PC-3 (cell line): ENCODE measurements at regions of chr15 and their contacts with region 1.

Region 1: GRCh38 chr15:38414357-38414756 is 39.6 kb upstream of the FAM98B start:
- DNase-seq: peak; percentile 76
- ATAC-seq: peak; percentile 100
- H3K4me3 ChIP-seq: no peak overlapping the region
- H3K27ac ChIP-seq: no peak overlapping the region
- H3K4me1 ChIP-seq: no peaks in the 10 kb centered on the region
- H3K27me3 ChIP-seq: peaks cover 25% of the 10 kb centered on the region
- CTCF ChIP-seq: peak; percentile 93

Region 2: DNA sequence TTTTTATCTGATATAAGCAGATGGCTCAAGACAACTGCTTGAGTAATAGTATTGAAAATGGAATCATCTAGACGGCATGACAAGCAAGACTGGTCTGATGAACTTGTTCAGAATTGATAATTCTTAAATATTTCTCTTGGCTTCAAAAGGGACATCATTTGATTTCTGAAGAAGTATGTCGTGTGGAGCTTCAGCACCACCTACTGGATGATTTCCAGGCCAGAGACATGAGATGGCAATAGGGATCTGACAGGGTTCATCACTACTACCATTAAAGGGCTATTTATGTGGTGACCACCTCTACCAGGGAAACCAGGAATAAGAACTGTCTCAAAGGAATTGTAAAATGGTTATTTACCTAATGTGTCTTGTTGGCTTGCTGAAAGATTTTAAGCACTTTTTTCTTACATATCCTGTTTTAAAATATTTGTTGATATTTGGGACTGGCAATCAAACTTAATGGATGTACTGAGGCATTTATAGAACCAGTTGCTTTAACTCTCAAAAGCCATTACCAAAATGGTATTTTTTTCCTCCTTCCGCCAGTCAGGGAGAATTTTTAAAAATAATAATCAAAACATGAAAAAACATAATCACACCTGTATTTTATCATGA is 59.9 kb before region 1 on chr15:
- CTCF ChIA-PET with region 1: no interaction called
- POLR2A ChIA-PET with region 1: no interaction called
- intact Hi-C with region 1: loop called (anchors 1 kb)
- DNase-seq: peak; percentile 87
- ATAC-seq: peak; percentile 85
- H3K4me3 ChIP-seq: no peak overlapping the region
- H3K27ac ChIP-seq: no peak overlapping the region
- H3K4me1 ChIP-seq: no peaks in the 10 kb centered on the region
- H3K27me3 ChIP-seq: no peaks in the 10 kb centered on the region
- CTCF ChIP-seq: peak; percentile 91